CD4-positive, alpha-beta T cell (primary cell): ENCODE measurements at regions of chr13 and their contacts with region 1.

Region 1: GRCh38 chr13:114143806-114144605 is 11.6 kb upstream of the RASA3 start:
- DNase-seq: peak in 11 of 14 experiments; percentile 28 to 77 (median 52)
- ATAC-seq: no peak
- H3K4me3 ChIP-seq: no peak overlapping the region
- H3K4me3 Mint-ChIP-seq: peak overlapping the region; percentile 21
- H3K27ac ChIP-seq: peak overlapping the region; percentile 78 to 82
- H3K27ac Mint-ChIP-seq: no peak overlapping the region
- H3K4me1 ChIP-seq: peaks cover 97% of the 10 kb centered on the region
- H3K4me1 Mint-ChIP-seq: peaks cover 40% of the 10 kb centered on the region
- H3K27me3 ChIP-seq: no peaks in the 10 kb centered on the region
- H3K27me3 Mint-ChIP-seq: no peaks in the 10 kb centered on the region
- CTCF ChIP-seq: peak; percentile 56

Region 2: DNA sequence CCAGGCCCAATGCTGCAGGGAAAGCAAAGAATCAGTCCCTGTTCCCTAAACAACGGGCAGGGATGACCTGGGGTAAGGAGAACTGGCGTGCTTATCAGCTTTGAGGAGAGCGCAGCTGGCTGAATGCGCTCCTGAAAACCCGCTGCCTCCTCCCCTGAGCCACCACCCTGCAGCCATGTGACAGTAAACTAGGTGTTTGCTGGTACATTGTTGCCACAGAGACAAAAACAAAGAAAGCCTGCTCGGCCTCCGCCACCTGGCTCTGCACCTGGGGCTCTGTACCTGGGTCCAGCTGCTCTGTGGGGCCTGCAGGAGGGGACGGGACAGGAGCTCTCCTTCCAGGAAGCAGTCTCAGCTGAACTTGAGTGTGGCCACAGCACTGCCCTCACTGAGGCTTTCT is 1153.2 kb before region 1 on chr13:
- CTCF ChIA-PET with region 1: no interaction called
- POLR2A ChIA-PET with region 1: no interaction called
- intact Hi-C with region 1: no loop called
- DNase-seq: no peak
- ATAC-seq: no peak
- H3K4me3 ChIP-seq: no peak overlapping the region
- H3K4me3 Mint-ChIP-seq: no peak overlapping the region
- H3K27ac ChIP-seq: no peak overlapping the region
- H3K27ac Mint-ChIP-seq: no peak overlapping the region
- H3K4me1 ChIP-seq: no peaks in the 10 kb centered on the region
- H3K4me1 Mint-ChIP-seq: no peaks in the 10 kb centered on the region
- H3K27me3 ChIP-seq: no peaks in the 10 kb centered on the region
- H3K27me3 Mint-ChIP-seq: no peaks in the 10 kb centered on the region
- CTCF ChIP-seq: no peak

Region 3: GRCh38 chr13:114043421-114044053 is 100.5 kb before region 1 on chr13:
- CTCF ChIA-PET with region 1: no interaction called
- POLR2A ChIA-PET with region 1: no interaction called
- intact Hi-C with region 1: no loop called
- DNase-seq: peak in 2 of 14 experiments; percentile 48 to 68
- ATAC-seq: peak; percentile 35
- H3K4me3 ChIP-seq: no peak overlapping the region
- H3K4me3 Mint-ChIP-seq: peak overlapping the region; percentile 46
- H3K27ac ChIP-seq: no peak overlapping the region
- H3K27ac Mint-ChIP-seq: peak overlapping the region; percentile 76
- H3K4me1 ChIP-seq: peaks cover 55% of the 10 kb centered on the region
- H3K4me1 Mint-ChIP-seq: peaks cover 55% of the 10 kb centered on the region
- H3K27me3 ChIP-seq: no peaks in the 10 kb centered on the region
- H3K27me3 Mint-ChIP-seq: no peaks in the 10 kb centered on the region
- CTCF ChIP-seq: no peak

Region 4: GRCh38 chr13:114099918-114100445 is 44.0 kb before region 1 on chr13:
- CTCF ChIA-PET with region 1: no interaction called
- POLR2A ChIA-PET with region 1: no interaction called
- intact Hi-C with region 1: no loop called
- DNase-seq: peak in 6 of 14 experiments; percentile 4 to 60 (median 33)
- ATAC-seq: peak; percentile 50
- H3K4me3 ChIP-seq: no peak overlapping the region
- H3K4me3 Mint-ChIP-seq: peak overlapping the region; percentile 84
- H3K27ac ChIP-seq: no peak overlapping the region
- H3K27ac Mint-ChIP-seq: peak overlapping the region; percentile 87
- H3K4me1 ChIP-seq: peaks cover 86% of the 10 kb centered on the region
- H3K4me1 Mint-ChIP-seq: peaks cover 76% of the 10 kb centered on the region
- H3K27me3 ChIP-seq: no peaks in the 10 kb centered on the region
- H3K27me3 Mint-ChIP-seq: no peaks in the 10 kb centered on the region
- CTCF ChIP-seq: no peak

Region 5: DNA sequence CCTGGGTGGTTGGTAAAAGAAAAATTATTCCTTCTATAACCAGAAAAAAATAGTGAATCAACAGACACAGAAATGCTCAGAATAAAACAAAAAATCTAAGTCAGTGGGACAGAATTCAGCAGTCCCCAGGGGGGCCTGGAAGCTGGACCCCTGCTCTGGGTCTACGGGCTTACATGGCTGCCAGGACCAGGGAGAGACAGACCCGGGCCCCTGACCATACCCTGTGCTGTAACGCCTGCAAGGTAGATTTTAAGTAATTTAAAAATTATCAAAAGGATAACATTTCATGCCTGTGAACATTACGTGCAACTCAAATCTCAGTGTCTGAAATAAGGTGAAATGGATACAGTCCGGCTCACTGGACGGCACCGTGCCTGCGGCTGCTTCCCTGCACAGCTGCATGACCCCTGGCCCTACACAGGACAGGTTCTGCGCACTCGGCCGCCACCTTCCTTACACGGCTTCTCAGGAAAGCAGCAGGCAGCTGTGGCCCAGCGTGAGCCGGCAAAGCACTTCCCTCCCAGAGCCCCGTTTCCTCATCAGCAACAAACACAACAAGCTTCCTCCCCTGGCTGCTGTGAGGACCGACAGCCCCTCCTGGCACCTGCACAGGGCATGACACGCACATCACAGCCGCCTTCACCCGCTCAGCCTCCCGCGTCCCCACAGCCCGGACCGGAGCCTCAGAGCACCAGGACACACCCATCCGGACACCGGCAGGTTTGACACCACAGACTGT is 33.7 kb before region 1 on chr13:
- CTCF ChIA-PET with region 1: interaction called, 7 read pairs
- POLR2A ChIA-PET with region 1: interaction called, 33 read pairs
- intact Hi-C with region 1: loop called in 1 of 2 experiments (anchors 5 kb)
- DNase-seq: peak; percentile 69 to 92 (median 80)
- ATAC-seq: peak; percentile 87
- H3K4me3 ChIP-seq: peak overlapping the region; percentile 45
- H3K4me3 Mint-ChIP-seq: peak overlapping the region; percentile 81
- H3K27ac ChIP-seq: peak overlapping the region; percentile 55 to 63
- H3K27ac Mint-ChIP-seq: peak overlapping the region; percentile 98
- H3K4me1 ChIP-seq: peaks cover 94% of the 10 kb centered on the region
- H3K4me1 Mint-ChIP-seq: peaks cover 85% of the 10 kb centered on the region
- H3K27me3 ChIP-seq: no peaks in the 10 kb centered on the region
- H3K27me3 Mint-ChIP-seq: no peaks in the 10 kb centered on the region
- CTCF ChIP-seq: peak; percentile 67

Region 6: GRCh38 chr13:114124921-114125320 is 19.1 kb before region 1 on chr13:
- CTCF ChIA-PET with region 1: interaction called, 5 read pairs
- POLR2A ChIA-PET with region 1: interaction called, 138 read pairs
- intact Hi-C with region 1: loop called in 1 of 2 experiments (anchors 1 kb)
- DNase-seq: peak in 13 of 14 experiments; percentile 40 to 88 (median 58)
- ATAC-seq: peak; percentile 69
- H3K4me3 ChIP-seq: no peak overlapping the region
- H3K4me3 Mint-ChIP-seq: peak overlapping the region; percentile 83
- H3K27ac ChIP-seq: peak overlapping the region in 1 of 2 donors; percentile 40
- H3K27ac Mint-ChIP-seq: peak overlapping the region; percentile 83
- H3K4me1 ChIP-seq: peaks cover 96% of the 10 kb centered on the region
- H3K4me1 Mint-ChIP-seq: peaks cover 80% of the 10 kb centered on the region
- H3K27me3 ChIP-seq: no peaks in the 10 kb centered on the region
- H3K27me3 Mint-ChIP-seq: no peaks in the 10 kb centered on the region
- CTCF ChIP-seq: no peak

Region 7: GRCh38 chr13:114161644-114162532 is 17.9 kb after region 1 on chr13:
- CTCF ChIA-PET with region 1: no interaction called
- POLR2A ChIA-PET with region 1: interaction called, 50 read pairs
- intact Hi-C with region 1: loop called in 1 of 2 experiments (anchors 2 kb)
- DNase-seq: peak in 13 of 14 experiments; percentile 30 to 73 (median 49)
- ATAC-seq: peak; percentile 78
- H3K4me3 ChIP-seq: peak overlapping the region; percentile 43
- H3K4me3 Mint-ChIP-seq: peak overlapping the region; percentile 82
- H3K27ac ChIP-seq: peak overlapping the region; percentile 42 to 70
- H3K27ac Mint-ChIP-seq: peak overlapping the region; percentile 93
- H3K4me1 ChIP-seq: peaks cover 80% of the 10 kb centered on the region
- H3K4me1 Mint-ChIP-seq: peaks cover 92% of the 10 kb centered on the region
- H3K27me3 ChIP-seq: no peaks in the 10 kb centered on the region
- H3K27me3 Mint-ChIP-seq: no peaks in the 10 kb centered on the region
- CTCF ChIP-seq: no peak

Region 8: GRCh38 chr13:114174529-114174961 is 30.5 kb after region 1 on chr13:
- CTCF ChIA-PET with region 1: no interaction called
- POLR2A ChIA-PET with region 1: interaction called, 11 read pairs
- intact Hi-C with region 1: no loop called
- DNase-seq: peak in 1 of 14 experiments; percentile 22
- ATAC-seq: no peak
- H3K4me3 ChIP-seq: no peak overlapping the region
- H3K4me3 Mint-ChIP-seq: peak overlapping the region; percentile 11
- H3K27ac ChIP-seq: no peak overlapping the region
- H3K27ac Mint-ChIP-seq: peak overlapping the region; percentile 55
- H3K4me1 ChIP-seq: peaks cover 44% of the 10 kb centered on the region
- H3K4me1 Mint-ChIP-seq: peaks cover 42% of the 10 kb centered on the region
- H3K27me3 ChIP-seq: no peaks in the 10 kb centered on the region
- H3K27me3 Mint-ChIP-seq: no peaks in the 10 kb centered on the region
- CTCF ChIP-seq: no peak

Region 9: GRCh38 chr13:114212158-114212495 is 68.1 kb after region 1 on chr13:
- CTCF ChIA-PET with region 1: no interaction called
- POLR2A ChIA-PET with region 1: interaction called, 15 read pairs
- intact Hi-C with region 1: no loop called
- DNase-seq: no peak
- ATAC-seq: peak; percentile 41
- H3K4me3 ChIP-seq: no peak overlapping the region
- H3K4me3 Mint-ChIP-seq: peak overlapping the region; percentile 8
- H3K27ac ChIP-seq: no peak overlapping the region
- H3K27ac Mint-ChIP-seq: peak overlapping the region; percentile 38
- H3K4me1 ChIP-seq: peaks cover 5% of the 10 kb centered on the region
- H3K4me1 Mint-ChIP-seq: peaks cover 40% of the 10 kb centered on the region
- H3K27me3 ChIP-seq: no peaks in the 10 kb centered on the region
- H3K27me3 Mint-ChIP-seq: no peaks in the 10 kb centered on the region
- CTCF ChIP-seq: no peak